Calu3 (cell line): ENCODE measurements at regions of chr5 and their contacts with region 1.

Region 1: DNA sequence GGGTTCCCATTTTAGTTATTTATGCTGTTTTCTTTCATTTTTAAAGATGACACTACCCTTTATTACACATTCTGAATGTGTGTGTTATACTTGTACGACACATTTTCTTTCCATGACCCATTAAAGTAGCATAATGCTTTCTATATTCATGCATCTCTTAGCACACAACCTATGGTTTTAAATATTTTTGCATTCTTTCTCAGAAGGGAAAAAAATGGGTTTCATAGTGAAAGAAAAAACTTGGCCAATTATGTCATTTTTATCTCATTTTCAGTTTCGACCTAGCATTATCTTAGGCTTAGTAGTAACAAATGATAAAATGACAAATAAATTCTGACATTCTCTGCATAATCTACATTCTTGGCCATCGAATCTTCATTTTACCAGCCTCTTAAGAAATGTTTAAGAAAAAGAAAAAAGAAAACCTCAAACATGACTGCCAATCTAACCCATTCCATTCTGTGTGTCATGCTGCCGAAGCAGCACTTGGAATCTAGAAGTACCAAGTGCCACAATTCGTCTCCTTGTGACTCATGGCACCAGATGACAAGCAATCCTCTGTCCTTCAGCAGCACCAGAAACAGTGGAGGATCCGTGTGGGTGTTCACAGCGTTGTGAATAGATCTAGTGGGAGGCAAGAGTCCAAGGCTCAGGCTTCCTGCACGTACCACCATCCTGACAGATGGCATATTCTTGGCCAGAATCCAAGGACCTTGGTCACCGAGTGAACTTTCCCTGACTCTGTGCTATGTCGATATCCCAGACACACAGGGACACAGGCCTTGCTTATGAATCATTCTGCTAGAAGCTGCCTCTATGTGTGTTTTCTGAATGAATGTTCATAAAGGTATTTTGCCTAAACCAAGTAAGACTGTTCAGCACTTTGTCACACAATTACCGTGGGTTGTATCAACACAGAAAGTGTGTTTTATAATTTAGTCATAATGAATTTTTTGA is 502.7 kb downstream of the NR2F1-AS1 start:
- DNase-seq: peak; percentile 95
- H3K4me3 Mint-ChIP-seq: peak overlapping the region; percentile 61
- H3K27ac Mint-ChIP-seq: peak overlapping the region; percentile 83
- H3K4me1 Mint-ChIP-seq: peaks cover 45% of the 10 kb centered on the region
- H3K27me3 Mint-ChIP-seq: no peaks in the 10 kb centered on the region
- CTCF ChIP-seq: no peak

Region 2: DNA sequence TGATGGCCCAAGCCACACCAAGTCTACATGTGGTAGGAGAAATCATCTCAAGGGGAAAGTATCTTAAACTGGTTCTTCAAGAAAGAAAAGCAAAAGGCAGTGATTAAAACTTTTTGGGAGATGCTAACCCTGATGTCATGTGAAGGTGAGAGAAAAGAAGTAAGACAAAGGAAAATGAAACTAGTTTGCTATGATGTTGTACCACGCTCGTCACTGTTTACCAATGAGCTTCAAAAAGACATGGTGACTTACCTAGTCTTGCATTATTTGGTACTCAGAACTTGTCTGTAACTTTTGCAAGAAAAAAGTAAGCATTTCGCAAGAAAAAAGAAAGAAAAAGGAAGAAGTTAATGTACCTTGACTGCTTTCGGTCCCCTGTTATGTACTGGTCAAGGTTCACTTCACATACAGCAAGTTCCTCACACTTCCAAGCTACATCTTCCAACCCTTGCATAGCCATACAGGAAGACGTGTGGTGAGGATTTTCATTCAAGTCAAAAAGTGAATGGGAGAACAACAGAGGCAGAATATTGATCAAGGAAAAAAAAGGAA is 236.7 kb before region 1 on chr5:
- CTCF ChIA-PET with region 1: no interaction called
- intact Hi-C with region 1: no loop called
- DNase-seq: no peak
- H3K4me3 Mint-ChIP-seq: no peak overlapping the region
- H3K27ac Mint-ChIP-seq: no peak overlapping the region
- H3K4me1 Mint-ChIP-seq: peaks cover 9% of the 10 kb centered on the region
- H3K27me3 Mint-ChIP-seq: no peaks in the 10 kb centered on the region
- CTCF ChIP-seq: no peak

Region 3: DNA sequence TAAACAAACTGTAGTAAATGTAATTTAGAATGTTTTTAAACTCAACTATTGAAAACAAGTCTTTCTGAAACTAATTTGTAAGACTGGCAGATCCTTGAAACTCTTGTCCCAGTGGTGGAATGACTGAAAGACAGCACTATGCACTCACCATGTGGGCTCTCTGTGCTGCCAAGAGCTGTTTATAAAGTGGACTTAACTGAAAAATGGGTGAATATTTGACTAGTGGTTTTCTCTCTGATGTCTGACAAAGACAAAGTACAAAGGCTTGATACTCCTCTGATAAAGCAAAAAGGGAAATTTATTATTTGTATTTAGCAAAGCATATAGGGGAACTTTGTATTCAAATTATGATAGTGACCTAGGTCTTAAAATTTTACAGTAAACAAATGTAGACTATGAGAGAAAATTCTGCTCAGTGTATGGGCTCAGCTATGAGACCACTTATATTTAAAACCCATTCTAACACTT is 132.7 kb before region 1 on chr5:
- CTCF ChIA-PET with region 1: no interaction called
- intact Hi-C with region 1: loop called (anchors 1 kb)
- DNase-seq: peak; percentile 44
- H3K4me3 Mint-ChIP-seq: peak overlapping the region; percentile 51
- H3K27ac Mint-ChIP-seq: peak overlapping the region; percentile 92
- H3K4me1 Mint-ChIP-seq: peaks cover 77% of the 10 kb centered on the region
- H3K27me3 Mint-ChIP-seq: no peaks in the 10 kb centered on the region
- CTCF ChIP-seq: no peak

Region 4: DNA sequence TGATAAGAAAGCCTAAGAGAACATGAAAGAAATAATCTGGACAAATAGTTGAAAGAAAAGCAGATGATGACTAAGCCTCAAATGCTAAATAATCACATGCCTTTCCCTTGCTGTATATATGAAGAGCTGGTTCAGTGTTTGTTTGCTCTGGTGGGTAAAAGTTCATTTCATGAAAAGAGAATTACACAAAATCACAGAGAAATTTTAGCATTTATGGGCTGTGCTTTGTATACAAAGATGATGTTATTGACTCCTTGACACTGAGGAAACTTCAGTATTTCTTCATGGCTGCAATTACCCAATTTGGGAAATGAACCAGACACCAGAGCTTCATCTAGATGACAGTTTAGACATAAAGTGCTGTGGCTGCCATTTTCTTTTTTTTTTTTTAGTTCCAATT is 24.5 kb before region 1 on chr5:
- CTCF ChIA-PET with region 1: no interaction called
- intact Hi-C with region 1: no loop called
- DNase-seq: no peak
- H3K4me3 Mint-ChIP-seq: no peak overlapping the region
- H3K27ac Mint-ChIP-seq: no peak overlapping the region
- H3K4me1 Mint-ChIP-seq: peaks cover 19% of the 10 kb centered on the region
- H3K27me3 Mint-ChIP-seq: no peaks in the 10 kb centered on the region
- CTCF ChIP-seq: no peak

Region 5: GRCh38 chr5:93164690-93165089 is 86.3 kb after region 1 on chr5:
- CTCF ChIA-PET with region 1: no interaction called
- intact Hi-C with region 1: loop called (anchors 1 kb)
- DNase-seq: peak; percentile 24
- H3K4me3 Mint-ChIP-seq: no peak overlapping the region
- H3K27ac Mint-ChIP-seq: no peak overlapping the region
- H3K4me1 Mint-ChIP-seq: peaks cover 24% of the 10 kb centered on the region
- H3K27me3 Mint-ChIP-seq: no peaks in the 10 kb centered on the region
- CTCF ChIP-seq: no peak

Region 6: DNA sequence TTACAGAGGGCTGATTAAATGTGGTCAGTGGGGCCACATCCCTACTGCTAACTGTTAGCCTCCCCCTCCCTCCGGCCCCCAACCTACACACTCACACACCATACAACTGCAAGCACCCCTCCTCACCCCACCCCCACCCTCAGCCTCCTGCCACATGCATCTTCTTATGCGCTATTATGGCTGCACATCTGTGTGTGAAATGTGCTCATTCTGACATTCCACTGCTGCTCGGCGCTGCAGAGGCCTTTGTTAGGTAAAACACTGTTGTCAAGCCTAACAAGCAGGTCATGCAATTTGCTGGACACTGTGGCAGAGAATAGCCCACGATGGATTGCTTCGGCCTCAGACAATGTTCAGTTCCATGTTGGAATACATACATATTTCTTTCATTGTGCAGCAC is 329.1 kb after region 1 on chr5:
- CTCF ChIA-PET with region 1: no interaction called
- intact Hi-C with region 1: loop called (anchors 2 kb)
- DNase-seq: no peak
- H3K4me3 Mint-ChIP-seq: no peak overlapping the region
- H3K27ac Mint-ChIP-seq: no peak overlapping the region
- H3K4me1 Mint-ChIP-seq: peaks cover 20% of the 10 kb centered on the region
- H3K27me3 Mint-ChIP-seq: no peaks in the 10 kb centered on the region
- CTCF ChIP-seq: no peak

Region 7: DNA sequence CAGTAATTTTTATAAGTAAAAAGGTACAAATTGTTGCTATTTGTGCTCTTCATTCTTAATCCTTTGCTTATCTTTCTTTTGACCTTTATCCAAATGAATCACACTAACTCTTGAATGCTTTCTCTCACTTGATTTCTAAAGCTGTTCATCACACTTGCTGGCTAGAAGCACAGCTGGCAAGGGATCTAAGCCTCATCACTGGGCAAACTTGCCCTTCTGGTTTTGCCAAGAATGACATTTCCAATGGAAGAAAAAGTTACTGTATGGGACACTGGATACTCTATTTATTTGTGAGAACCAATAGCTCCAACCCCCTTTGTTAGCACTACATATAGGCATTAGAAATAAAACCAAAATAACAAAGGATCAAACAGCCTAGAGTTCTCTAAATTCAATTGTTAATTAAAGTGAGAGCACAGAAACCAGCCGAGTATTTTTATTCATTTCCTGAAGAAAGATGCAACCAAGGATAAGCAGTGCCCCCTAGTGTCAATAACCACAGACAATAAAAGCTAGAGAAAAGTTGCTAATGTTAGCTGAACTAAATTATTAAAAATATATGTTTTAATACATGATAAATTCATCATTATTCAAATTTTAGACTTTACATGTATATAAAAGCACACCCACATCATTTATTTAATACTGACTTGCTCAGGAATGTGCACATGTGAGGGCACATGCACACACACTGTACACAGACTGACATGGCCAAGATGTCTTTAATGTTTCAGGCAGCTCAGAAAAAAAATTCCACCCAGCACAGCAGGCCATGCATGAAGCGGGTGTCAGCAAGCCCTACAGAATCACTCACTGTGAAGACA is 722.8 kb after region 1 on chr5:
- CTCF ChIA-PET with region 1: no interaction called
- intact Hi-C with region 1: loop called (anchors 5 kb)
- DNase-seq: peak; percentile 58
- H3K4me3 Mint-ChIP-seq: no peak overlapping the region
- H3K27ac Mint-ChIP-seq: peak overlapping the region; percentile 55
- H3K4me1 Mint-ChIP-seq: peaks cover 15% of the 10 kb centered on the region
- H3K27me3 Mint-ChIP-seq: no peaks in the 10 kb centered on the region
- CTCF ChIP-seq: peak; percentile 84